A673 (cell line): ENCODE measurements at regions of chr14 and their contacts with region 1.

Region 1: DNA sequence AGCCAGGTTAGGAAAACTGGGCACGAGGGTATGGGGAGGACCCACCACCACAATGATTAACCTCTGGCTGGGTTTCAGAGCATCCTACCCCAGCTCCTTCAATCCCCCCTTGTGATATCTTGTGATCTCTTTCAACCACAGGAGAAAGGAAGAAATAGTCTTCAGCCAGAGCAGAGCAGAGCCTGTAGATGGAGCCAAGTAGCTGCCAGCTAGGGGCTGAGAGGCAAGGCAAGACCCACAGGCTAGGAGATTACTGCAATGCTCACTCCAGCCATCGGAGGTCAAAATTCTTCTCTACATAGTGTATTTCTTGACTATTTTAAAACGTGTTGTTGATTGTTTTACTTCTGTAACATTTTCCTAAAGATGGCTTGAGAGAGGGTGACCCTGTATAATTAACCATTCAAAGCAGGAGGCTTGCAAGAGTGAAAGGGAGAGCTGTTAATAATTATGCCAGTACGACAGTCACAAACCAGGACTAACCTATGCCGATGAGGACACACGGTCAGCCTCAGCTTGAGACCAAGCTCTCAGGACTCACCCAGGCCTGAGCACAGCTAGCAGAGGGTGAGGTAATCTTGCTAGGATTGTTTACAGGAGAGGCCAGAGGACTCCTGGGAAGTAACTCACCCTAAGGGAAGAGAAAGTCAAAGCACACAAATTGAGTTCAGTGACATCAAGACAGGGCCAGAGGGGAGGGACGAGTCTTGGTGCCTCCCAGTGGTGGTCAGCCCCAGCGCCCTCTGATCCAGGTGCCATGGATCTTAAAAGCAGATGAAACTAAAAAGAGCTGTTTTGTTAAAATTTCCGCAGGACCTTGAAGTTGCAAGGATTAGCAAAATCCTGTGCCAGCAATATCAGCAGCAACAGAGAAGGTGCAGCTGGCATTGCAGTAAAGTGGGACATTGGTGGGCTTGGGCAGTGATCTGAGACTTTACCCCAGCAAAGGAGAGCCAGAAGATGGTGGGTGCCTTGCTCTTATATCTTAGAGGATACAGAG is 29.8 kb upstream of the CDKN3 start:
- DNase-seq: peak; percentile 72
- H3K4me3 ChIP-seq: no peak overlapping the region
- H3K27ac ChIP-seq: no peak overlapping the region
- H3K4me1 ChIP-seq: peaks cover 11% of the 10 kb centered on the region
- H3K27me3 ChIP-seq: no peaks in the 10 kb centered on the region
- CTCF ChIP-seq: peak; percentile 71

Region 2: GRCh38 chr14:53444677-53445312 is 922.2 kb before region 1 on chr14:
- CTCF ChIA-PET with region 1: no interaction called
- POLR2A ChIA-PET with region 1: no interaction called
- intact Hi-C with region 1: no loop called
- DNase-seq: no peak
- H3K4me3 ChIP-seq: no peak overlapping the region
- H3K27ac ChIP-seq: no peak overlapping the region
- H3K4me1 ChIP-seq: no peaks in the 10 kb centered on the region
- H3K27me3 ChIP-seq: peaks cover 23% of the 10 kb centered on the region
- CTCF ChIP-seq: no peak

Region 3: GRCh38 chr14:53967606-53968005 is 399.4 kb before region 1 on chr14:
- CTCF ChIA-PET with region 1: no interaction called
- POLR2A ChIA-PET with region 1: no interaction called
- intact Hi-C with region 1: no loop called
- DNase-seq: no peak
- H3K4me3 ChIP-seq: no peak overlapping the region
- H3K27ac ChIP-seq: no peak overlapping the region
- H3K4me1 ChIP-seq: no peaks in the 10 kb centered on the region
- H3K27me3 ChIP-seq: peaks cover 49% of the 10 kb centered on the region
- CTCF ChIP-seq: no peak

Region 4: DNA sequence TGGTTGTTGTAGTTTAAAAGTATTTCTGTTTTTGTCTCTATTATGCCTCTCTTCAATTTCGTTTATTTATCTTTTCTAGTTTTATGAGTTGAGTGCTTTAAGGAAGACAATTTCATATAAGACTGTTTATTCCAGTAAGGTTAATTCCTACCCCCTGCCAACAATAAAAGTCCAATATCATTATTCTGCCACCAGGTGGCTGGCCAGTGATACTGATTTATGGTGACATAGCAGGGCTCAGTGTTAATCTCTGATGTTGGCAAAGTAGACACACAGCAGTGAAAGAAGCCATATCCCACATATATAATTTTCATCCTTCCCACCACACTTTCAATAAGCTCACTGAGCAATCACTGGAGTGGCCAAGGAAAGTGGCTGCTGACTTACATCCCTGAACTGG is 341.4 kb before region 1 on chr14:
- CTCF ChIA-PET with region 1: no interaction called
- POLR2A ChIA-PET with region 1: no interaction called
- intact Hi-C with region 1: no loop called
- DNase-seq: peak; percentile 19
- H3K4me3 ChIP-seq: no peak overlapping the region
- H3K27ac ChIP-seq: no peak overlapping the region
- H3K4me1 ChIP-seq: no peaks in the 10 kb centered on the region
- H3K27me3 ChIP-seq: no peaks in the 10 kb centered on the region
- CTCF ChIP-seq: peak; percentile 36; the same call in 1 of the 2 replicates

Region 5: DNA sequence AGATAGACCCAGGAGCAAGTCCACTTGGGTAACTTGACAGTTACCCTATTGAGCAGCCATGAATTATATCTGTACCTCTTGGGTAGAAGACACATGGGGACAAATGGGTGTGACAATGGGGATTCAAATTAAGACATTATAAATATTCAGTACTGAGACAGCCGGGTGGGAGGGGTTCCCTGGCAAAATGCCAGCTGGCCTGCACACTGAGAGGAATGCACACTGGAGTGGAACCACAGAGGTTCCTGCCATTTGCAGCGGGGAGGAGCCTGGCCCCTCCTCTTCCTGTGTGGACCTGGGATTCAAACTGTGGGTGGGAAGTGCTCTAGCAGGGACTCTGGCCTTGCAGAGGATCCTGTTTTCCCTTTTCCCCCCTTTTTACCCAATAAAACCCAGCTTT is 88.9 kb before region 1 on chr14:
- CTCF ChIA-PET with region 1: no interaction called
- POLR2A ChIA-PET with region 1: no interaction called
- intact Hi-C with region 1: no loop called
- DNase-seq: peak; percentile 45
- H3K4me3 ChIP-seq: no peak overlapping the region
- H3K27ac ChIP-seq: no peak overlapping the region
- H3K4me1 ChIP-seq: no peaks in the 10 kb centered on the region
- H3K27me3 ChIP-seq: no peaks in the 10 kb centered on the region
- CTCF ChIP-seq: no peak

Region 6: DNA sequence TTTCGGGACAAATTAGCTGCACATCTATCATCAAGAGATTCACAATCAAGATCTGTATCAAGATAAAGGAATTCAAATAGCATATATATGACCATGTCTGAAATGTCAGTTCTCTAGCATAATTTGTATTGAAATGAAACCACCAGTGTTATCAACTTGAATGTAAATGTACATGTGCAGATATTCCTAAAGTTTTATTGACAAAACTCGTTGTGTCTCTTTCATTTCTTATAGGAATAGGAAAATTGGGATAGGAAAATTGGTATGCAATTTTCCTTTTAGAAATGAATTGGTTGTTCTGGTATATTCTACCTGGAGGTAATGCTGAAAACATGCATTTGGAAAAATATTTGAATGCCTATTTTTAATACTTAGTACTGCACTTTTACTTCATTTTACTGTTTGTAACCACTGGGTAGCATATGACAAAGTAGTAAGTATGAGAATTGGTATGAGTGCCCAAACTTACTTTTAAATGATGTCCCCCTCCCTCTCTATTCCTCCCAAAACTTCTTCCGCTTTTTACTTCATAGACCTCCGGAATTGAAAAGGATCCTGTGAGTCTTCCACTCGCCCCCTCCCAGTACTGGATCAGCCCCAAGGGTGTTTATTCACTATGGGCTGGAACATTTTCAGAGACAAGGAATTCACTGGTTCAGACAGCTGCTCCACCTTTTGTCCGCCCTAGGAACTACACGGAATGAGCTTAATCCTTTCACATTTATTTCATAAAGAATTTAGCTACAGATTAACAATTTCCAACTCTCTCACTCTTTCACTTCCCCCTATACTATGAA is 53.2 kb after region 1 on chr14:
- CTCF ChIA-PET with region 1: interaction called, 7 read pairs
- POLR2A ChIA-PET with region 1: no interaction called
- intact Hi-C with region 1: loop called (anchors 2 kb)
- DNase-seq: peak; percentile 64
- H3K4me3 ChIP-seq: no peak overlapping the region
- H3K27ac ChIP-seq: no peak overlapping the region
- H3K4me1 ChIP-seq: no peaks in the 10 kb centered on the region
- H3K27me3 ChIP-seq: no peaks in the 10 kb centered on the region
- CTCF ChIP-seq: peak; percentile 70